Heart left ventricle (tissue), 16 donors: ENCODE measurements at regions of chr13 and their contacts with region 1.

Region 1: DNA sequence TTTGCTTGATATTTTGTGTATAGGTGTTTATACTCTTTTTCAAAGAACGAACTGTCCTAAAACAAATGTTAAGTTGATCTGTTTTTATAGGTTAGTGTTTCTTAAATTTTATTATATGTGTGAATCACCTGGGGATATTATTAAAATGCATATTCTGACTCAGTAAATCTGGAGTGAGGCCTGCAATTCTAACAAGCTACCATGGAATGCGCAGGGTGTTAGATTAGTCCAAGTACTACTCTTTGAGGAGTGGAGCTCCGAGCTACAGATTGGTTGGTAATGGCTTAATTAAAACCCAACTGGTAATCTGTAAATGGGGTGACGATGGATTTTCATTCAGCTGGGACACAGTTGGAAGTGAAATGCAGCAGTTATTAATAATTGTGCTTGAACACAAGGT is 214.1 kb upstream of the UFM1 start:
- DNase-seq: no peak
- ATAC-seq: no peak
- H3K4me3 ChIP-seq: no peak overlapping the region
- H3K27ac ChIP-seq: no peak overlapping the region
- H3K4me1 ChIP-seq: no peaks in the 10 kb centered on the region
- H3K27me3 ChIP-seq: no peaks in the 10 kb centered on the region
- CTCF ChIP-seq: no peak
- POLR2A ChIP-seq: no peak

Region 2: DNA sequence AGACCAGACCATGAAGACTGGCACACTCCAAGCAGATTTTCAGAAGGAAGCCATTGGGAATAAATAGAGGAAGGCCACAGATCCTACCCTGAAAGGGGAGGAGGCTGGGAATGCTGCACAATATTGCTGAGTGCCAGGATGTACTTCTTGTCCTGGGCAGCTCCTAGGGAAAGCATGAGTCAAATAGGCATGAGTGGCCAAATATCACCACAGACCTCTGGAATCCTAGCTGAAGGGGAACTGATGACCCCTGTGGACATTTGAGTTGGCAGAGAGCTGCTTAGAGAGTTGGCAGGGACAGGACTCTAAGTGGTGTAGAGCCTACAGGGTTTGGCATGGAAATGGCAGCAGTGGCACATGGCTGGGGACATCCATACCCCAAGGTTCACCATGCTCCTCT is 31.7 kb before region 1 on chr13:
- intact Hi-C with region 1: loop called in 1 of 10 experiments (anchors 2 kb)
- DNase-seq: no peak
- ATAC-seq: no peak
- H3K4me3 ChIP-seq: no peak overlapping the region
- H3K27ac ChIP-seq: no peak overlapping the region
- H3K4me1 ChIP-seq: peaks cover 0 to 4% (median 0%) of the 10 kb centered on the region in 12 donors
- H3K27me3 ChIP-seq: no peaks in the 10 kb centered on the region
- CTCF ChIP-seq: no peak
- POLR2A ChIP-seq: no peak